ENCODE measurements at regions of chr2 and their contacts with region 1.

Region 1: GRCh38 chr2:222837511-222838056 is 23.3 kb upstream of the ACSL3 start:
- DNase-seq: peak; percentile 75 to 100
- H3K4me3 ChIP-seq: peak overlapping the region; percentile 31; the same call in 1 of the 2 replicates
- H3K27ac ChIP-seq: peak overlapping the region; percentile 82
- H3K4me1 ChIP-seq: peaks cover 83% of the 10 kb centered on the region
- H3K27me3 ChIP-seq: no peaks in the 10 kb centered on the region
- CTCF ChIP-seq: no peak

Region 2: DNA sequence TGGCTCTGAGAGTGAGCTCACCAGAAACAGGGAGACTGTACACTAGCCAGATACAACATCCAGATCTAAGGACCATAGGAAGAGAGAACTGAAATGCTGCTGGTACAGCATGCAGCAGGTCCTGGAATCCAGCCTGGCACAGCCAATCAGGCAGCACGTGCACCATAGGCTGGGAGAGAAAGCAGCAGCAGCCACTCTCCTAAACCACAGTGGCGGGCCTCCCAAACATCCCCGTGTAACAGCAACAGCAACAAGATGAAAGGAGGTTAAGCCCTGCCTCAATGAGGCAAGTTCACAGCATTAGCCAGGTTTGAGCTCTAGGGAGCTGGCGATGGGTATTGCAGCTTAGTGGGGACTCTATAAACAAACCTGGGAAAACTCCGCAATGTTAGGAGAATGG is 1457.5 kb before region 1 on chr2:
- CTCF ChIA-PET with region 1: no interaction called
- POLR2A ChIA-PET with region 1: no interaction called
- intact Hi-C with region 1: no loop called
- DNase-seq: no peak
- H3K4me3 ChIP-seq: no peak overlapping the region
- H3K27ac ChIP-seq: no peak overlapping the region
- H3K4me1 ChIP-seq: no peaks in the 10 kb centered on the region
- H3K27me3 ChIP-seq: no peaks in the 10 kb centered on the region
- CTCF ChIP-seq: no peak

Region 3: DNA sequence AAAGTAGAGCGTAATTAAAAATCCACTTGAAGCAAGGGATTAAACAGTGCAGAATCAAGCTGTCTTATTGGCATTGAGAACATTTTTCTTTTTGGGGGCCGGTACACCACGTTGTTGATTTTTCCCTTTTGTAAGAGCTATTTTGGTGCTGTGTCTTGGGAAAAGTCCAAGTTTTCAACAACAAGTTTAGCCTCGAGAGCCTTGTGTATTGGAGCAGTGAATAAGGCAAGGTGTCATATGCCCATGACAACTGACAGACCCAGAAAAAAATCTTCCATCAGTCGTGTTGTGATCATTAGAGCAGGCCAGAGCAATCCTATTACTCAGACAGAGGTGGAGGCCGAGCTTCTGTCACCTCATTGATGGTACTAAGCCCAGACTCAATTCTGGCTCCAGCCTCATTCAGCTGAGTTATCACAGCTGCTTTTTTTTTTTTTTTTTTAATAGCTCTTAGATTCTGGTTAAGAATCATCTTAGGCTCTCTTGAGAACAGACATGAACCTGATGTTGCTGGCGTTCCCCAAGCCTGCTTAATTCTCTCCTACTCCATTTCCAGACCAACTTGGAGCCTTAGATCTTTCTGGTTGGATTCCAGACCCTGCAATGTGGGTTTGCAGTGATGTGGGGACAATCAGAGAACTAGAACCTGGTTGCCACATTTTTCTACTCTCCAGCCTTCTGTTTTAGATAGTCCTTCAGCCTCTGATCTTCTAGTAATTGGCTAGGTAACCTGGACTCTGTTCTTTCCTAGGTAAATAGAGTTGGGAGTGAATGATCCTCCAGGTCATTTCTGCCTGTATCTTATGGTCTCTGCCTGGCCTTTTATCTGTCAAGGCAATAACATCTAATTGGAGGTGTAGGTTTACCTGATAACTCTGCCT is 123.0 kb before region 1 on chr2:
- CTCF ChIA-PET with region 1: interaction called, 10 read pairs
- POLR2A ChIA-PET with region 1: interaction called, 10 read pairs
- intact Hi-C with region 1: loop called (anchors 1 kb)
- DNase-seq: no peak
- H3K4me3 ChIP-seq: no peak overlapping the region
- H3K27ac ChIP-seq: no peak overlapping the region
- H3K4me1 ChIP-seq: no peaks in the 10 kb centered on the region
- H3K27me3 ChIP-seq: no peaks in the 10 kb centered on the region
- CTCF ChIP-seq: no peak

Region 4: DNA sequence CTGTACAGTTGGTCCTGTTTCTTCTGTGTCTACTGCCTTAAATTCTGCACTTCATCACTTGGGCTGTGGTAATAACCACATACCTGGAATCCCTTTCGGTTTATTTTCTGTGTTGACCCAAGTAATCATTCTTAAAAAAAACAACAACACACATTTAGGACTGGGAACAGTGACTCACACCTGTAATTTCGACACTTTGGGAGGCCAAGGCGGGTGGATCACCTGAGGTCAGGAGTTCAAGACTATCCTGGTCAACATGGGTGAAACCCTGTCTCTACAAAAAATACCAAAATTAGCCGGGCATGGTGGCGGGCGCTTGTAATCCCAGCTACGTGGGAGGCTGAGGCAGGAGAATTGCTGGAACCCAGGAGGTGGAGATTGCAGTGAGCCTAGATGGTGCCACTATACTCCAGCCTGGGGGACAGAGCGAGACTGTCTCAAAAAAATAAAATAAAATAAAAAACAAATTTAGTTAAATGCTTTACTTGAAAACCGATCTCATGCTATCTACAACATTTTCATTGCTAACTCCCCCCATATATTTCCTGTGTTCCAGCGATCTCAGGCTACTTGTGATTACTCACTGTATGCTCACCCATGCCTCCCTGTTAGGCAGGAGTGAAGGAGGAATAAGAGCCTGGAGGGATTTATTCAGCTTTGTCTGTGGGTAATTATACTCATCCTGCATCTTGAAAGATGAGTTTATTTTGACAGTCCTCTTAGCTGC is 41.5 kb after region 1 on chr2:
- CTCF ChIA-PET with region 1: interaction called, 3 read pairs
- POLR2A ChIA-PET with region 1: interaction called, 9 read pairs
- intact Hi-C with region 1: loop called (anchors 1 kb)
- DNase-seq: peak; percentile 79 to 99
- H3K4me3 ChIP-seq: no peak overlapping the region
- H3K27ac ChIP-seq: peak overlapping the region; percentile 69
- H3K4me1 ChIP-seq: peaks cover 88% of the 10 kb centered on the region
- H3K27me3 ChIP-seq: no peaks in the 10 kb centered on the region
- CTCF ChIP-seq: no peak

Region 5: GRCh38 chr2:222892321-222892720 is 54.7 kb after region 1 on chr2:
- CTCF ChIA-PET with region 1: no interaction called
- POLR2A ChIA-PET with region 1: no interaction called
- intact Hi-C with region 1: no loop called
- DNase-seq: peak in 1 of 2 experiments; percentile 56
- H3K4me3 ChIP-seq: peak overlapping the region; percentile 0; the same call in 1 of the 2 replicates
- H3K27ac ChIP-seq: peak overlapping the region; percentile 42
- H3K4me1 ChIP-seq: peaks cover 33% of the 10 kb centered on the region
- H3K27me3 ChIP-seq: no peaks in the 10 kb centered on the region
- CTCF ChIP-seq: no peak

Region 6: GRCh38 chr2:222903234-222904220 is 65.9 kb after region 1 on chr2:
- CTCF ChIA-PET with region 1: no interaction called
- POLR2A ChIA-PET with region 1: no interaction called
- intact Hi-C with region 1: no loop called
- DNase-seq: peak; percentile 48 to 68
- H3K4me3 ChIP-seq: no peak overlapping the region
- H3K27ac ChIP-seq: 0 out of 2 replicates have a peak overlapping the region, but pooled peaks have one; percentile 7
- H3K4me1 ChIP-seq: peaks cover 29% of the 10 kb centered on the region
- H3K27me3 ChIP-seq: no peaks in the 10 kb centered on the region
- CTCF ChIP-seq: peak; percentile 99

Measured in PC-9 (cell line).